AG04449 (cell line): ENCODE measurements at regions of chr9 and their contacts with region 1.

Region 1: GRCh38 chr9:130107234-130107861 is 53.6 kb downstream of the GPR107 start:
- DNase-seq: no peak
- H3K4me3 ChIP-seq: no peak overlapping the region
- CTCF ChIP-seq: peak; percentile 71

Region 2: DNA sequence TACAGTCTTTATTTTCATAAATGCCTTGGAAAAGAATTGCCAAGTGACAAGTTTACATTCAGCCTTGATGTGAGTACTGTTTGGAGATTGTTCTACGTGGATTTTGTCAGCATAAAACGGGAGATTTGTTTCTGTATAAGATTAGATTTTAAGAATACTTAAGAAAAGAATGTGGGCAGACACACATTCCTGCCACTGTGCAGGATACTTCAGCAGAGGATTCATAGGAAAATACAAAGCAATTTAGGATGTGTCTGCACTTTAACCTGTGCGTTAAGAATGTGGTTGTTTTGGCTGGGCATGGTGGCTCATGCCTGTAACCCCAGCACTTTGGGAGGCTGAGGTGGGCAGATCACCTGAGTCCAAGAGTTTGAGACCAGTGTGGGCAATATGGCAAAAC is 16.4 kb before region 1 on chr9:
- CTCF ChIA-PET with region 1: interaction called, 38 read pairs
- POLR2A ChIA-PET with region 1: no interaction called
- DNase-seq: no peak
- H3K4me3 ChIP-seq: no peak overlapping the region
- CTCF ChIP-seq: no peak

Region 3: DNA sequence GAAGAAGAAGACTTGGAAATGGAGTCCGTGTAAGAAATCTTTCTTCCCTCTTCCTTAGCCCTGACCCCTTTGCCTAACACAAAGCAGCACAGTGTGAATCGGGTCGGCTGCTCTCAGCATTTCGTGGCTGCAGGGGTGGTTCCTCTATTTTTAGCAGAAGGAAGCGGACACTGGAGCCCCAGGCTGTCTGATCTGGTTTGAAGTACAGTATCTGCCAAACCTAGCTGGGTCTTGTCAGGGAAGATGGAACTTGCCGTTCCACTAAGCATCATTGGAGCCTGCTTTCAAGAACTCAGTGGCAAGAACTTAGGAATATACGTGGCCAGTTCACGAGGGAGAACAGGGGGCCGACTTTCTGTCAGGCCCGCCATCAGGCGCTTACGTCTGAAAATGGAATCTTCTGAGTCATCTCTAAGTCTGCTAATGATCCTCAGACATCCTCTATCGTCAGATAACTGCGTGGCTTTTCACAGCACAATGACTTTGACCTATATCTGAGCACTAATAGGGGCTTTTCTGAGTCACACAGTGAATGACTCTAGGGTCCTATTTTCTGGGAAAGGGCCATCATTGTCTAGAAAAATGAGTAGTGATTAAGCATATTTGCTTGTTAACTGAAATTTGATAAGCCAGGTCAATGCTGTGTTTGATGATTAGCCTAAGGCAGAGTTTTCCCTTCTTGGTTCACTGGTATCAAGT is 21.5 kb after region 1 on chr9:
- CTCF ChIA-PET with region 1: interaction called, 13 read pairs
- POLR2A ChIA-PET with region 1: no interaction called
- DNase-seq: peak; percentile 85
- H3K4me3 ChIP-seq: no peak overlapping the region
- CTCF ChIP-seq: no peak

Region 4: GRCh38 chr9:130235897-130236668 is 128.7 kb after region 1 on chr9:
- CTCF ChIA-PET with region 1: interaction called, 384 read pairs
- POLR2A ChIA-PET with region 1: no interaction called
- DNase-seq: no peak
- H3K4me3 ChIP-seq: no peak overlapping the region
- CTCF ChIP-seq: peak; percentile 97